Panc1 (cell line): ENCODE measurements at regions of chr6 and their contacts with region 1.

Region 1: DNA sequence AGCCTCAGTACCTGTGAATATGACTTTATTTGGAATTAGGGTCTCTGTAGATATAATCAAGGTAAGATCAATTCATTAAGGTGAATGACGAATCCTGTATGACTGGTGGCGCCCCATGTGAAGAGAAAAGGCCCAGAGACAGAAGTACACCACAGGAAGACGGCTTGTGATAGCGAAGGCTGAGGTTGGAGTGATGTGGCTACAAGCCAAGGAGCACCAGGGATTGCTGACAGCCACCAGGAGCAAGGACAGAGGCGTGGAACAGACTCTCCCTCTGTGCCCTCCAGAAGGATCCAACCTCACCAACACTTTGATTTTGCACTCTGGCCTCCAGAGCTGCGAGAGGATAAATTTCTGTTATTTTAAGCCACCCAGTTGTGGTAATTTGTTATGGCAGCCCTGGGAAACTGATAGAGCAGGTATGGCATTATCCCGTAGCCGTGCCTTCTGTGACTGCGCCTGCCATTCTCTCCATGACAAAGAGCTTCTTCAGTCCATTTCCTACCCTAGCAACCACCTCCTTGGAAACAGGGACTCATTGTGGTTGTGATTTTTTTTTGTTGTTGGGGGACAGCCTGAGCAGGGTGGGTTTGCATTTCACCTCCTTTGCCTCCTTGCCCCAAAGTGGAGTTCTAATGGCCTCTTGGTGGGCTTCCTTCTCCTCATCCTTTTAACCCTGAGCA is 29.6 kb downstream of the PTK7 start:
- DNase-seq: no peak
- ATAC-seq: 0 out of 2 replicates have a peak, but pooled peaks have one; percentile 28
- H3K4me3 ChIP-seq: no peak overlapping the region
- H3K27ac ChIP-seq: no peak overlapping the region
- H3K4me1 ChIP-seq: peaks cover 20% of the 10 kb centered on the region
- H3K27me3 ChIP-seq: no peaks in the 10 kb centered on the region
- CTCF ChIP-seq: no peak

Region 2: GRCh38 chr6:42984001-42984923 is 121.4 kb before region 1 on chr6 and contains the start of gene PPP2R5D:
- CTCF ChIA-PET with region 1: no interaction called
- POLR2A ChIA-PET with region 1: interaction called, 10 read pairs
- in situ Hi-C with region 1: no loop called
- intact Hi-C with region 1: no loop called
- DNase-seq: peak; percentile 93
- ATAC-seq: peak; percentile 97
- H3K4me3 ChIP-seq: peak within 1 kb of the TSS; percentile 66 to 75
- H3K27ac ChIP-seq: peak within 1 kb of the TSS; percentile 95
- H3K4me1 ChIP-seq: peaks cover 10% of the 10 kb centered on the region; the same call in 1 of the 2 replicates
- H3K27me3 ChIP-seq: no peaks in the 10 kb centered on the region
- CTCF ChIP-seq: no peak
- total RNA-seq, gene PPP2R5D: 63.6 TPM

Region 3: DNA sequence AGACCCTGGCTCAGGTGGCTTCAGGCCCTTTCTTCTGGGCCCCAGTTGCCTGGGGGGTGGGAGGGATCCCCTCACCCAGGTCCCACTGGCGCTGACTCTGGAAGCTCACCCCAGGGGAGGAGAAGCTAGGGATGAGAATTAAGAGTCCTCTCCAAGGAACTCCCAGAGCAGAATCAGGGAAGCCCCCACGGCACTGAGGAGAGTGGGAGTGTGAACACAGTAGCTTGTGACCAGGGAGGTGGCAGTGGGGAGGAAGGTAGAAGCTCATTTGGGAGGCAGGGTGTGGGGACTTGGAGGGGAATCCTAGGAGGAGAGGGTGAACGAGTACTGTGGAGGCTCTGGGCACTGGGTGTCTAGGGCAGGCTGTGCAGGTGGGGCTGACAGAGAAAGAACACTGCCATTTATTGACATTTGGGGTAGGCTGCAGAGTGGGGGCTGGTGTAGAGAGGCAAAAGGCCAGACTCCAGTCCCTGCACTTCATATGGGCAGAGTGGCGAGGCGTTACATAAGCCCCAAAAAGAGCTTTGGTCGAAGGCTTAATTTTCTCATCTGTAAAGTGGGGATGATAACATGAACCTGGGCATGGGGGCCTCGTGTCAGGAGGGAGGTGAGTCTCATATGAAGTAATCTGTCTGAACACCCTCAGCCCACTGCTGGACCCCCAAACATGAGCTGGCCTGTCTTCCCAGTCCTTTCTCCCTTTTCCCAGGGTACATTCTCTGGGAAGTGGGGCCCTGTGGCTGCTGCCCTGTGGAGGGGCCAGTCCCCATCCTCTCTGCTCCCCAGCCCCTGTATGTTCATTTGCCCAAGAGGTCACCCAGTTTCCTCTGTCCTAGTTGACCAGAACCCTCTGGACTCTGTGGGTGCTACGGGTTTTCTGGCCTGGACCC is 744.9 kb after region 1 on chr6:
- CTCF ChIA-PET with region 1: no interaction called
- POLR2A ChIA-PET with region 1: interaction called, 11 read pairs
- in situ Hi-C with region 1: no loop called
- intact Hi-C with region 1: no loop called
- DNase-seq: no peak
- ATAC-seq: no peak
- H3K4me3 ChIP-seq: no peak overlapping the region
- H3K27ac ChIP-seq: no peak overlapping the region
- H3K4me1 ChIP-seq: no peaks in the 10 kb centered on the region
- H3K27me3 ChIP-seq: no peaks in the 10 kb centered on the region; the same call in 1 of the 2 replicates
- CTCF ChIP-seq: no peak